ENCODE measurements at regions of chr2 and their contacts with region 1.

Region 1: GRCh38 chr2:160482673-160483072 is 10.9 kb downstream of the RBMS1 start:
- DNase-seq: no peak
- H3K4me3 ChIP-seq: no peak overlapping the region
- H3K27ac ChIP-seq: peak overlapping the region; percentile 34
- H3K4me1 ChIP-seq: peaks cover 83% of the 10 kb centered on the region
- H3K27me3 ChIP-seq: no peaks in the 10 kb centered on the region
- CTCF ChIP-seq: no peak

Region 2: GRCh38 chr2:159855557-159856061 is 627.1 kb before region 1 on chr2:
- intact Hi-C with region 1: no loop called
- DNase-seq: no peak
- H3K4me3 ChIP-seq: no peak overlapping the region
- H3K27ac ChIP-seq: no peak overlapping the region
- H3K4me1 ChIP-seq: peaks cover 16% of the 10 kb centered on the region
- H3K27me3 ChIP-seq: no peaks in the 10 kb centered on the region
- CTCF ChIP-seq: no peak

Region 3: DNA sequence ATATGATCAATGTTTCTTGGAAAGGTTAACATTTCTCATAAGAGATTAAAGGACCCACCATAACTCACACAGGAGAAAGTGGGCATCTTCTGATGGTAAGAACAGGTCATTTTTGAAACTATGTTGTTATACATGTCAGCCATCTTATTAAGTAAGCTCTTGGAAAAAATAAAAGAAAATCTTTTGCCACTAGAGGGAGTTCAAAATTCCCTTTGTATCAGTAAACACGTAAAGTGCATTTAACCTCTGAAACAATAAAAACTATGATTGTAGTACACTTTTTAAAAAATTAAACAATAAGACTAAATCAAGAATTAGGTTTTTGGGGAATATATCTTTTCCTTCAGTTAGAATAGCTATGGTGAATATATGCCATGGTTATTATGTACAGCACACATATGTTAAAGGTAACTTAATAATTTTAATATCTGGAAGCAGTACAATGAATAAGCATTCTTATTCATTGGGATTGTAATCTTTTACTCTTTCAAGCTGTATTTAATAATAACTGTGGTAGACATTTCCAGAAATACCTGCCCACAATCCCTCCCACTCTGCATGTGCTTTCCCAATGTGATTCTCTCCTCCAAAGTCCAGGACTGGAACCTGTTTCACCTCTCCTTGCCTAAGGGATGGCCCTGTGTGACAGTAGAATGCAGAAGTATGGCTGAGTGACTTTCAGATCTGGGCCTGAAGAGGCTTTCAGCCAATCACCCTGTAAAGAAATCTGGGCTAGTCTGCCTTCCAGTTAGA is 53.2 kb before region 1 on chr2:
- intact Hi-C with region 1: loop called (anchors 10 kb)
- DNase-seq: no peak
- H3K4me3 ChIP-seq: no peak overlapping the region
- H3K27ac ChIP-seq: peak overlapping the region; percentile 78
- H3K4me1 ChIP-seq: peaks cover 75% of the 10 kb centered on the region
- H3K27me3 ChIP-seq: no peaks in the 10 kb centered on the region
- CTCF ChIP-seq: peak; percentile 64

Region 4: GRCh38 chr2:160635488-160635887 is 152.8 kb after region 1 on chr2:
- intact Hi-C with region 1: no loop called
- DNase-seq: no peak
- H3K4me3 ChIP-seq: no peak overlapping the region
- H3K27ac ChIP-seq: peak overlapping the region; percentile 14
- H3K4me1 ChIP-seq: peaks cover 42% of the 10 kb centered on the region
- H3K27me3 ChIP-seq: no peaks in the 10 kb centered on the region
- CTCF ChIP-seq: no peak